ENCODE measurements at regions of chr6 and their contacts with region 1.

Region 1: DNA sequence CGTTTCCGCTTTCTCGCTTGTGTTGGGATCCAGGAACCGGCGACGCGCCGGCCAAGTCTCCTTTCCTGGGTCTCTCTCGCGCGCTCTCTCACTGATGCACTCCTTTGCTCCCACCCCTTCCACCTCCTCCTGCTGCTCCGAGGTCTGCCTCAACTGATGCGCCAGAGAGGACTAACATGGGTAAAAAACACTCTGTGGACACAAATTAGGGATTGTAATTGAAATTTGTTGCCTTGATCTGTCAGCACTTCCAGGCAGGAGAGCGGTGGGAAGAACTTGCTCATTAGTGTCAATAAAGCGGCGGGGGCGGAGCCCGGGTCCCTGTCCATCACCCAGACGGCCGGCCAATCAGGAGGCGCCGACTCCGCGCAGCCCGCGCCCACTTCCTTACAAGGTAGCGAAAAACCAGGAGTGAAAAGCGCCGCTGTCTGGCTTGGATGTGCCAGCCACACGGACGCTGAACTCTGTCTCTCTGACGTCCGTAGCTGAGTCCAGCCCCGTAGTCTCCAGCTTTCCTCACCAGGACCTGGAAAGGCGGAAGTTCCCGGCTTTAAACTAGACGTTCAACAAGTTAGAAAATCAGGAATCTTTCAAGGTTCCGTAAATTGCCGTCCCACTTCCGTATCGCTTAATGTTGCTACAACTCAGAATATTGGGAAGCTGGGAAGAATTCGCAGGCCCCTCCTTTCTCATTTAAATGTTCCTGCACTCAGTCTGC is at the start of gene TBX18:
- DNase-seq: peak; percentile 88 to 94 (median 91)
- ATAC-seq: peak; percentile 87 to 94 (median 92)
- H3K4me3 ChIP-seq: peak within 1 kb of the TSS; percentile 20 to 75 (median 62)
- H3K27ac ChIP-seq: peak within 1 kb of the TSS; percentile 61 to 91 (median 84)
- H3K4me1 ChIP-seq: peaks cover 0 to 19% (median 0%) of the 10 kb centered on the region in 12 donors
- H3K27me3 ChIP-seq: peaks cover 9 to 96% (median 78%) of the 10 kb centered on the region in 9 donors
- CTCF ChIP-seq: peak in 1 of 12 donors; percentile 20
- POLR2A ChIP-seq: peak in 1 of 2 donors; percentile 20
- total RNA-seq, gene TBX18: 1.3 to 14.9 (median 3.8) TPM

Region 2: GRCh38 chr6:84645000-84645399 is 119.5 kb before region 1 on chr6:
- intact Hi-C with region 1: loop called in 1 of 10 experiments (anchors 10 kb)
- DNase-seq: no peak
- ATAC-seq: no peak
- H3K4me3 ChIP-seq: no peak overlapping the region
- H3K27ac ChIP-seq: no peak overlapping the region
- H3K4me1 ChIP-seq: peaks cover 0 to 4% (median 0%) of the 10 kb centered on the region in 12 donors
- H3K27me3 ChIP-seq: no peaks in the 10 kb centered on the region
- CTCF ChIP-seq: no peak
- POLR2A ChIP-seq: no peak

Region 3: DNA sequence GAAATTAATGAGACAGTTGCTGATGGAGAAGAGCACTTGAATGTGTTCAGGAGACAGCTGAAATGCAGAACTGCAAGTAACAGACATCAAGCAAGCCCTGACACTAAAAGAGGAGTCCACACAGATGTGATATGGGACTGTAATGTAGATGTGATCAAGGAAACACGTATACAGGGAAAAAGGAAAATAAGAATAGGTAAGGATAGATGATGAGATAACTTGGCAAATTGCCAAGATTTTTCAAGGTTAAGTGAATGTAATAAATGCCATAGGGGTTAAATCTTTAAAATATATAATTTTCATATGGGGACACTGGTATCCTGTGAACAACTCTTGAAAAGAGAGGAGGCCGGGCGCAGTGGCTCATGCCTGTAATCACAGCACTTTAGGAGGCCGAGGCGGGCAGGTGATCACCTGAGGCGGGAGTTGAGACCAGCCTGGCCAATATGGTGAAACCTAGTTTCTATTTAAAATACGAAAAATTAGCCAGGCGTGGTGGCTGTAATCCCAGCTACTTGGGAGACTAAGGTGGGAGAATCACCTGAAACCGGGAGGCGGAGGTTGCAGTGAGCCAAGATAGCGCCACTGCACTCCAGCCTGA is 836.3 kb after region 1 on chr6:
- intact Hi-C with region 1: no loop called
- DNase-seq: peak in 1 of 5 donors; percentile 52
- ATAC-seq: no peak
- H3K4me3 ChIP-seq: no peak overlapping the region
- H3K27ac ChIP-seq: no peak overlapping the region
- H3K4me1 ChIP-seq: no peaks in the 10 kb centered on the region
- H3K27me3 ChIP-seq: no peaks in the 10 kb centered on the region
- CTCF ChIP-seq: no peak
- POLR2A ChIP-seq: no peak